Activated naive CD4-positive, alpha-beta T cell treated with anti-CD3 and anti-CD28 coated beads for 36 hours (primary cell): ENCODE measurements at regions of chr6 and their contacts with region 1.

Region 1: DNA sequence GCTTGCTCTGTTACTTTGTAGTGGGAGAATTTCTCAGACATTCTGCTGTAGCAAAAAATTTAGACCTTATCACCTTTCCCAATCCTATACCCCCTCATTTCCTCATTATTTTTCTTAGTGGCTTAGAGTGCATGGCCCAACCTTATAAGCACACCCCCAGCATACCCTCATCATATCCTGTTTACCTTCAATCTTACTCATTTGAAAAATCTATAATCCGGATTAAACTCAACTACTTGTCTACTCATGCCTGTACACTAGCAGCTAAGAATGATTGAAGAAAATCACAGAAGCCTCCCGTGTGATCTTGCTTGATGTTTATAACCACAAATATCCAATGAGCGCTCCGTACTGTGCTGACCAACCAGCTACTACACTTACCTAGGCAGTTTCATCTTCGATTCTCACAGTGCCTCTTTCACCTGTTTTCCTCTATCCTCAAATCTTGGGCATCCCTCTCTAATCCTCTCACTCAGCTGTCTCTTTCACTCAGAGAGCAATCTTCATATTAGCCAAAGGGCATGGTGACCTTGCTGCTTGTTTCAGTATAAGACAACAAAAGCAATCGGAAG is 36.6 kb downstream of the AIG1 start:
- DNase-seq: peak; percentile 18
- H3K4me3 Mint-ChIP-seq: no peak overlapping the region
- H3K27ac Mint-ChIP-seq: no peak overlapping the region
- H3K4me1 Mint-ChIP-seq: peaks cover 6% of the 10 kb centered on the region
- H3K27me3 Mint-ChIP-seq: no peaks in the 10 kb centered on the region

Region 2: DNA sequence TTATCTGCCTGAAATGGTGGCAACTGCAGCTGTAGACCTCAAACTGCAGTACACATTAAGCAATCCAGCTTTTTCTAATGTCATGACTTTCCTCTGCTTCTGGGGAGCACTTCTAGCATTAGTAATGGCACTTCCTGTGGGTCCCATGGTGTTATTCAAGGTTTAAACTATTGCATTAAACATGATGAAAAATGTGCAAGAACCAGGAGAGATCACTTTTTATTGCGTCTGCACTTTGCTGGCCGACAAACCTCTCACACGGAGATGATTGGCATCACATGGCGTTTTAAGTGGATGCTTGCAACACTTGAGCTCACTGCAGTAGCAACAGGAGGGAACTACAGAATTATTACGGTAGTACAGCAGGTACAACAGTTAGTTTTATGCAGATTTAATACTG is 300.7 kb before region 1 on chr6:
- CTCF ChIA-PET with region 1: no interaction called
- intact Hi-C with region 1: no loop called
- DNase-seq: no peak
- H3K4me3 Mint-ChIP-seq: no peak overlapping the region
- H3K27ac Mint-ChIP-seq: no peak overlapping the region
- H3K4me1 Mint-ChIP-seq: peaks cover 74% of the 10 kb centered on the region
- H3K27me3 Mint-ChIP-seq: no peaks in the 10 kb centered on the region

Region 3: GRCh38 chr6:143136647-143137046 is 39.3 kb after region 1 on chr6:
- CTCF ChIA-PET with region 1: no interaction called
- intact Hi-C with region 1: loop called (anchors 1 kb)
- DNase-seq: no peak
- H3K4me3 Mint-ChIP-seq: no peak overlapping the region
- H3K27ac Mint-ChIP-seq: peak overlapping the region; percentile 62
- H3K4me1 Mint-ChIP-seq: peaks cover 51% of the 10 kb centered on the region
- H3K27me3 Mint-ChIP-seq: no peaks in the 10 kb centered on the region

Region 4: GRCh38 chr6:143223895-143224294 is 126.6 kb after region 1 on chr6:
- CTCF ChIA-PET with region 1: no interaction called
- intact Hi-C with region 1: no loop called
- DNase-seq: no peak
- H3K4me3 Mint-ChIP-seq: no peak overlapping the region
- H3K27ac Mint-ChIP-seq: no peak overlapping the region
- H3K4me1 Mint-ChIP-seq: no peaks in the 10 kb centered on the region
- H3K27me3 Mint-ChIP-seq: no peaks in the 10 kb centered on the region

Region 5: GRCh38 chr6:143271024-143271423 is 173.7 kb after region 1 on chr6:
- CTCF ChIA-PET with region 1: no interaction called
- intact Hi-C with region 1: no loop called
- DNase-seq: no peak
- H3K4me3 Mint-ChIP-seq: no peak overlapping the region
- H3K27ac Mint-ChIP-seq: no peak overlapping the region
- H3K4me1 Mint-ChIP-seq: no peaks in the 10 kb centered on the region
- H3K27me3 Mint-ChIP-seq: no peaks in the 10 kb centered on the region